AG04450 (cell line): ENCODE measurements at regions of chr13 and their contacts with region 1.

Region 1: GRCh38 chr13:95191821-95192563 is 109.3 kb downstream of the ABCC4 start:
- DNase-seq: peak; percentile 57
- H3K4me3 ChIP-seq: no peak overlapping the region
- H3K27ac ChIP-seq: no peak overlapping the region
- H3K27me3 ChIP-seq: no peaks in the 10 kb centered on the region
- CTCF ChIP-seq: peak; percentile 97

Region 2: DNA sequence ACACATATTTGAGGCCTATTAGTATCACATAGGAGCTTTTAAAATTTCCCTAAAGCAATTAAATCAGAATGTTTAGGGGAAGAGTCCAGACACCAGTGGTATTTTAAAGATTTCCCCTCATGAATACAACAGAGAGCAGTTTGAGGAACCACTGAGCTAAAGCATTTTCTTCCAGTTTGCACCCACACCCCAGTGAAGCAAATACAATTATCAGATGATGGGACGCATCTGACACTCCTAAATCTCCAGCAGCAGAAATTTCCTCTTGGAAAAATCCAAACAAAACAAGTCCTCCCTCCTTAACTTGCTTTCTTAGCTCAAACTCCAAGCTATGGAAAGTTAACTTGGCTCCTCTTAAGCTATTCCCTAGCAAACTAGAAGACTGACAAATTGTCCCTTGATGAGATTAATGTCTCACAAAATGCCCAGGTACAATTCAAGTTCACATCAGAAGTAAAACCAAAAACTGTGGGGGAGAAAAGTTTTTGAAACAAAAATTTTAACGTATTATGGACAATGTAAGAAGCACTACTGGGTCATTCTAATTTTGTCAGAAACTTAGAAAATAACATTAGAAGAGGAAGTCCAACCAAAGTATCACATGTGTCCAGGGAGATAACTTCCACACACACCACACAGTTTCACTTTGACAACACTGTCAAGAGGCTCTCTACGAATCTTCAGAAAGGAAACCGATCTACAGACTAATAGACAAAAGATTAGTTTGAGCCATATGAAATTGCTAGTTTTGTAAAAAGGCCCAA is 35.1 kb after region 1 on chr13:
- CTCF ChIA-PET with region 1: interaction called, 12 read pairs
- POLR2A ChIA-PET with region 1: no interaction called
- DNase-seq: no peak
- H3K4me3 ChIP-seq: no peak overlapping the region
- H3K27ac ChIP-seq: no peak overlapping the region
- H3K27me3 ChIP-seq: no peaks in the 10 kb centered on the region
- CTCF ChIP-seq: no peak

Region 3: GRCh38 chr13:95289020-95289444 is 97.0 kb after region 1 on chr13:
- CTCF ChIA-PET with region 1: interaction called, 11 read pairs
- POLR2A ChIA-PET with region 1: no interaction called
- DNase-seq: no peak
- H3K4me3 ChIP-seq: no peak overlapping the region
- H3K27ac ChIP-seq: no peak overlapping the region
- H3K27me3 ChIP-seq: no peaks in the 10 kb centered on the region
- CTCF ChIP-seq: no peak

Region 4: DNA sequence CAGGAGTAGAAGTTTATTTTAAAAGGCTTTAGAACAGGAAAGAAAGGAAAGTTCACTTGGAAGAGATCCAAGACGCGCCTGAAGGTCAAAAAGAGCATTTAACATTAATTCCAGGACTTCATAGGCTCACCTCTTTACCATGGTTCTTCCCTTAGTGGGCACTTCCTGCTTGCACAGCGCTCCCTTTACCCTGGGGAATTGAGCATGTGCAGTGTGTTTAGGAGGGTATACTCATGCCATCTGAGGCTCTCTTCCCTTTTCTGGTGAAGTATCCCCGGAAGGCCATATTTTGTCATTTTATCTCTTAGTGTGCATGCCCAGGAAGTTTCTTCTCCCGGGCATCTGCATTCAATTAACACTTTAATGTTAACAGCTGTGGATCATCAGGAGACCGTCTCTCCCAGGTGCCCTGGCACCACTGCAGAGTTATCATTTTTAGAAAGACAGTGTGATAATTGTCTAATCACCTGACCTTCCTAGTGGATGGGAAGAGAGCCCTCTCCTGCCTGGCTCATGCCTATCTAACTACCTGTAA is 175.4 kb after region 1 on chr13:
- CTCF ChIA-PET with region 1: interaction called, 19 read pairs
- POLR2A ChIA-PET with region 1: no interaction called
- DNase-seq: no peak
- H3K4me3 ChIP-seq: no peak overlapping the region
- H3K27ac ChIP-seq: no peak overlapping the region
- H3K27me3 ChIP-seq: peaks cover 8% of the 10 kb centered on the region
- CTCF ChIP-seq: no peak

Region 5: GRCh38 chr13:95403828-95404522 is 212.0 kb after region 1 on chr13:
- CTCF ChIA-PET with region 1: interaction called, 535 read pairs
- POLR2A ChIA-PET with region 1: interaction called, 6 read pairs
- DNase-seq: peak; percentile 55
- H3K4me3 ChIP-seq: peak overlapping the region; percentile 57
- H3K27ac ChIP-seq: no peak overlapping the region
- H3K27me3 ChIP-seq: no peaks in the 10 kb centered on the region
- CTCF ChIP-seq: peak; percentile 93

Region 6: DNA sequence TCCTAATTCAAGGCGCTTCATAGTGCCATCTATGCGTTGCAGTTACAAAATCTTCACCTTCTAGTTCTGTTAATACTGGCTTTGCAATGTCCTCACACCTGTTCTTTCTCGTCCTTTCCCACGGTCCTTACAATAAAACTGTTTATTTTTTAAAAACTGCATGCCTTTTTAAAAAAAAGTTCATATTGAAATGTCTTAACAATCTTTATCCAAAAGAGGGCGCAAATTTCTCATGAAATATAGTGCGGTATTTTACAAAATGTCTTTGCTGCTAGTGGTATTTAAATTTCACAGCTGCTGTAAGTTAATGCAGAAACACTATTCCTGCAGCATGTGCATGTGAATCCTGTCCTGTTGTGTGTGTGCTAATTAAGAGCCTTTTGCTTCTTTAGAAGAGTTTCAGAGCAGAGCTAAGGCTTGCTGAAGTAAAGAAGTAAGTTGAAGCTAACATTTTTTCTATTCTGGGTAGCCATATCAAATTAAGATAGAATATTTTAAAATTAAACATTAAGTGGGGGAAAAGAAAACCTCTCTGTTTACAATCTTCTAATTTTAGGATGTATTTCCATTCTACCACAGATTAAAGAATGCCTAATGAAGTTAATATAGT is 344.7 kb after region 1 on chr13:
- CTCF ChIA-PET with region 1: no interaction called
- POLR2A ChIA-PET with region 1: no interaction called
- DNase-seq: no peak
- H3K4me3 ChIP-seq: no peak overlapping the region
- H3K27ac ChIP-seq: no peak overlapping the region
- H3K27me3 ChIP-seq: no peaks in the 10 kb centered on the region
- CTCF ChIP-seq: peak; percentile 49